Activated naive CD8-positive, alpha-beta T cell treated with anti-CD3 and anti-CD28 coated beads, Interleukin-2, amount 10 ng/mL, durations not matched to agents 7 days and 5 days (primary cell): ENCODE measurements at regions of chr15 and their contacts with region 1.

Region 1: GRCh38 chr15:48877630-48878595 is at the start of gene EID1:
- DNase-seq: peak; percentile 95
- ATAC-seq: peak; percentile 95
- H3K4me3 Mint-ChIP-seq: peak within 1 kb of the TSS; percentile 95
- H3K27ac Mint-ChIP-seq: peak within 1 kb of the TSS; percentile 97
- H3K4me1 Mint-ChIP-seq: peaks cover 16% of the 10 kb centered on the region
- H3K27me3 Mint-ChIP-seq: peaks cover 20% of the 10 kb centered on the region
- total RNA-seq, gene EID1: 84.8 to 85.0 TPM

Region 2: DNA sequence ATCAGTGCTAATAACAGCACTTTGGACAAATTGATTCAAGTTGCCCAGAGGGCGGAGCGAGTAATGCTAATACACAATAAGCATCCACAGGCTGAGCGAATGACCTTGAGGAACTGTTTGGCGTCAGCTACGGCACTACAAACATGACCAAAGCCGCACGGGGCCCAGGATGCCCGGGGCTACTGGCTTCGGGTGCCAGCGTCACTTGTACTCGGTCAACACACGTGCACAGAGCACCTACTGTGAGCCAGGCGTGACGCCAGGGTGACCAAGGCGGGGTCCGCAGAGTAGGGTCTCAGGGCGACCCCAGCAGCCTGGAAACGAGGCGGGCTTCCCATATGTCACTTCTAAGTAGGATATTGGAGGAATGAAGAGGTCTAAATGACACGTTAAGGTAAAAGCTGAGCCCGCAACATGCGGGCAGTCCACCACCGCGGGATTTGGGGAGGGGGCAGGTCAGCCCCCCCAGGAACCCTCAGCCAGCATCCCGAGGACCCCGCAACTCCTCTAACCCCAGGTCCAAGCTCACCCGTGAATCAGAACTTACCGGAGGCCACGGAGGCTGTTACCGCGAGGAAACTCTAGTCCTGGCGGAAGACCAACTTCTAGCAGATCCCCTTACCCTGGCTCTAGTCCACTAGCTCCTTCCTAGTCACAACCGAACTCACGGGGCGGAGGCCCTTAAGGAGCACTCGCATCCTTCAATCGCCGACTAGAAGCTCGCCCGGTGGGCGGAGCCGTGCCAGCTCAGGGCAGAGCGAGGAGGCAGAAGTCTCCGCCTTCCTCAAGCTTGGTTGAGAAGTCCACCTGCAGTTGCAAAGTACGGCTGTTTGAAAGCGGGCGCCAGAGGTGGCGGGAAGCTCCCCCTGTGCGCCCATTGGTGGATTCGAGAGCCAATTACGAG is 67.2 kb before region 1 on chr15 and contains the start of gene CEP152:
- POLR2A ChIA-PET with region 1: interaction called, 14 read pairs
- DNase-seq: peak; percentile 93
- ATAC-seq: peak; percentile 96
- H3K4me3 Mint-ChIP-seq: peak within 1 kb of the TSS; percentile 90
- H3K27ac Mint-ChIP-seq: peak within 1 kb of the TSS; percentile 96
- H3K4me1 Mint-ChIP-seq: peaks cover 37% of the 10 kb centered on the region
- H3K27me3 Mint-ChIP-seq: peaks cover 9% of the 10 kb centered on the region
- total RNA-seq, gene CEP152: 31.1 to 39.2 TPM

Region 3: GRCh38 chr15:48905847-48906246 is 27.9 kb after region 1 on chr15:
- POLR2A ChIA-PET with region 1: no interaction called
- DNase-seq: no peak
- ATAC-seq: no peak
- H3K4me3 Mint-ChIP-seq: no peak overlapping the region
- H3K27ac Mint-ChIP-seq: no peak overlapping the region
- H3K4me1 Mint-ChIP-seq: peaks cover 2% of the 10 kb centered on the region
- H3K27me3 Mint-ChIP-seq: no peaks in the 10 kb centered on the region

Region 4: DNA sequence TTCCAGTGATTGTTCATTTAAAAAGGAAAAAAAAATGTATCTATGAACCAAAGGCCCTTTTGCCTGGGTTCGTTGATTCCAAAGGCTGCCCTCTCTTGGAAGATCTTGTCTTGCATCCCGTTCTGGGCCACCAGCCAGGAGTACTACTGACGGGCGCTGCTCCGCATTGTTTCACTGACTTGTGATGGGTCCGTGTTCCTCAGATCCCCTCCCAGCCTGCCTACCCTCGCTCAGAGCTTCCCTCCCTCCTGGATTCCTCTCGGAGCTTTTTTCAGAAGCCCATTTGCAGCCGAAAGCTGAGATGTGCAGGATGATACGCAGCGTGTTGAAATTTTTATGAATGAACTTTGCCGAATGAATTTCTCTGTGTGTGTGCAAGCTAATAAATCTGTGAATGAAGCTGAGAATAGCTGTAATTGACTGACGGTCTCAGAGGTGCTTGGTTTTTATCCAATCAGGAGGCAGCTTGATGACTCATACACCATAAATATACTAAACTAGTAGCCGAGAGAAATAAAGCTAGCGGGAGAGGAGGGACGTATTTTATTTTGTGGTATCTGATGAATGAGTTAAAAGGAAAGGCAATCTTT is 85.7 kb after region 1 on chr15 and contains the start of gene SHC4:
- POLR2A ChIA-PET with region 1: interaction called, 24 read pairs
- DNase-seq: no peak
- ATAC-seq: peak; percentile 31
- H3K4me3 Mint-ChIP-seq: peak within 1 kb of the TSS; percentile 78
- H3K27ac Mint-ChIP-seq: peak within 1 kb of the TSS; percentile 74
- H3K4me1 Mint-ChIP-seq: peaks cover 33% of the 10 kb centered on the region
- H3K27me3 Mint-ChIP-seq: peaks cover 30% of the 10 kb centered on the region
- total RNA-seq, gene SHC4: 0.23 to 0.47 TPM

Region 5: DNA sequence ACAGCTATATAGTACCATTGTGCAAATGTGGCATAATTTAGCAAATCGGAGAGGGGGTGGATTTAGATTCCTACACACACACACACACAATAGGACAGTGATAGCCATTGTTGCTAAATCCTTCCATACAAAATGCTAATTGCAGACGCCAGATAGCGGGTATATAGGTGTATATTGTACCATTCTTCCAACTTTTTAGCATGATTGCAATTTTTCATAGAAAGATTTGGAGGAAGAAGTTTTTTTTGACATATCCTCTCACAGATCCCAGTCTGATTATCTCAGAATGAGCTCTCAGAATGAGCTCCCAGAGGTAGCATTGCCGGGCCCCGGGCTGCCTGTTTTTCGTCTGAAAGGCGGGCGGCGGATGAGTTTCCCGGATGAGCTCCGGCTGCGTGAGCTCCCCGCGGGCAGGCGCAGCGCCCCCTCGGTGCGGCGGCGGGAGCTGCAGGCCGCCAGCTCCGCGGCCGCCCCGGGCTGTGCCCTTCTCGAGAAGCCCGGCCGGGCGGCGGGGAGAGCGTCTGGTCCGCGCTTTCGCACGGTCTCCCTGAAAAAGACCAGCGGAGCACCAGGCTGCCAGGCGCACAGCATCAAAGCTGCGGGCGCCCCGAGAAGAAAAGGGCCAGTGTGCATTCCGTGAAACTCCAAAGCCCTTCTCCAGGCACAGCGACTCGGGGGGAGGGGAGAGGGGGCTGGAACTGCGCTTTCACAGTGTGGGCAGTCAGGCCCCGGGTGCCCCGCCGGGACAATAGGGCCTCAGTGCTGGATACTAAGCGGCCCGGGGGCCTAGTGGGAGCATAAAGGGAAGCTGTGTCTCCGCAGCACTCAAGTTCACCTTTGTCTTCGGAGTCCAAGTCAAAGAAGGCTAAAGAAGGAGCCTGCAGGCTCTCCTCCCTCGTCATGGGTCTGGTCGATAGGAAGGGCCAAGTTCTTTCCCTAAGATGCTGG is 97.8 kb after region 1 on chr15:
- POLR2A ChIA-PET with region 1: interaction called, 24 read pairs
- DNase-seq: peak; percentile 93
- ATAC-seq: peak; percentile 98
- H3K4me3 Mint-ChIP-seq: peak overlapping the region; percentile 63
- H3K27ac Mint-ChIP-seq: peak overlapping the region; percentile 25
- H3K4me1 Mint-ChIP-seq: peaks cover 7% of the 10 kb centered on the region
- H3K27me3 Mint-ChIP-seq: peaks cover 15% of the 10 kb centered on the region

Region 6: GRCh38 chr15:49155110-49155833 is 277.4 kb after region 1 on chr15 and contains the start of gene COPS2:
- POLR2A ChIA-PET with region 1: interaction called, 12 read pairs
- DNase-seq: peak; percentile 81
- ATAC-seq: peak; percentile 94
- H3K4me3 Mint-ChIP-seq: peak within 1 kb of the TSS; percentile 89
- H3K27ac Mint-ChIP-seq: peak within 1 kb of the TSS; percentile 93
- H3K4me1 Mint-ChIP-seq: peaks cover 32% of the 10 kb centered on the region
- H3K27me3 Mint-ChIP-seq: no peaks in the 10 kb centered on the region
- total RNA-seq, gene COPS2: 58.9 to 61.1 TPM